Astrocyte of the cerebellum (primary cell): ENCODE measurements at regions of chr20 and their contacts with region 1.

Region 1: DNA sequence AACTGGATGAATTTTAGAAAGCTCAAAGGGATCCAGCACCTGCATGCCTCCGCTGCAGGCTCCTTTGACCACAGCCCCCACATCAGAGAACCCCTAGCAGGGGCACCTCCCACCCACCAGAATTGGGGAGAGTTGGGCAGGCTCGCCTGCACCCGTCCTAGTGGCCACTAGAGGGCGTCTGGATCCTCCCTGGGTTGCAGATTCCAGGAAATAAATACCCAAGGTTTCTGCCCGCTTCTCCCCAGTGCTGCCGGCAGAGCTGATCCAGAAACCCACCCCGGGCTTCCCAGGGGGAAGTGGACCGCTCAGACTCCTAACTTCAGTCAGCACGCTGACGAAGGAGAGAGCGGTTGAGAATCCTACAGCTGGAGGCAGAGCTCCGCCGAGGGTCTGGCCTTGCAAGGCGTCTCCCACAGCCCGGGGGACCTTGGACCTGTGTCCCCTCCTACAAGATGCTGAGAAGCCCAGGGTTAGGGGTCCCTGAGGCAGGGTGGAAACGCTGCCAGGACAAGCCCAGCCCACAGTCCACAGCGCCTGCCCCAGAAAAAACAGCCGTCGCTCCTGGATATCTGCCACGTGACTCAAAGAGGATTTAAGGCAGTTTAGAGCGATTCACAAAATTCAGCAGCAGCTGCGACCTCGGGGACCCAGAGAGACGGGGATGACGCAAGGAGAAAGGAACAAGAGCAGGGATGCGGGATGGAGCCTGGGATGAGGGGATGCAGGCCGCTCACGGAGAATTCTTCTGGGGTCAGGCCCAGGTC is 32.6 kb upstream of the PHACTR3 start:
- DNase-seq: peak; percentile 20
- H3K4me3 ChIP-seq: peak overlapping the region; percentile 24
- CTCF ChIP-seq: peak; percentile 97

Region 2: GRCh38 chr20:59512651-59513050 is 59.1 kb before region 1 on chr20:
- in situ Hi-C with region 1: no loop called
- DNase-seq: no peak
- H3K4me3 ChIP-seq: no peak overlapping the region
- CTCF ChIP-seq: no peak

Region 3: GRCh38 chr20:59605165-59606042 is 33.7 kb after region 1 on chr20:
- in situ Hi-C with region 1: no loop called
- DNase-seq: no peak
- H3K4me3 ChIP-seq: no peak overlapping the region
- CTCF ChIP-seq: no peak

Region 4: GRCh38 chr20:59620854-59621485 is 49.2 kb after region 1 on chr20:
- in situ Hi-C with region 1: loop called (anchors 5 kb)
- DNase-seq: no peak
- H3K4me3 ChIP-seq: no peak overlapping the region
- CTCF ChIP-seq: no peak

Region 5: GRCh38 chr20:59723607-59724456 is 152.1 kb after region 1 on chr20:
- in situ Hi-C with region 1: no loop called
- DNase-seq: no peak
- H3K4me3 ChIP-seq: no peak overlapping the region
- CTCF ChIP-seq: no peak